ENCODE measurements at regions of chr2 and their contacts with region 1.

Region 1: DNA sequence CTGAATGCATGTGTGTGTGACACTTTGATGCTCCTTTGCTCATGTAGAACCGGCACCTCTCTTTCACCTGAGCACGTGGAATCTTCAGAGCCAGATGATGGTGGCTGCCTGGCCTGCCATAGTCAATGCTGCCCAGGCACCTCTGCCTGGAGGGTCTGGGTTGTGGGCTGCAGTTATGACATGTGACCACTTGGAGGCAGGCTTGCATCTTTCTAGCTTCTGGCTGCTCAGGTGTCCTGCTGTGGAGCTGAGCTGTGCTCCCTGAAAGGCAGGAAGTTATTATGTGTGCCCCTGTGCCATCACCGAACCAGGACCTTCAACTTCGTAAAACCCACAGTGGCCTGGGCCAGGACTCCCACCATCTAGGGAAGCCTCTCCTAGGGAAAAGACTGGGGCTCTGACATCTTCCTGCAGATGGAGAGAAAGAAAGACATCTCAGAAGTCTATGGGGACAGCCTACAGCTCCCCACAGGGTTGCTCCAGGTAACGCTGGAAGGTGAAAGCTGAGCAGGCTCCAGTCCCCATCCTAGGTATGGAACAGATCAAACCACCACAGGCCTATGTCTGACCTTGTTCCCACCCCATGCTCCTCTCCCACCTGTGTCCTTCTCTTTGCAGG is 30.2 kb downstream of the PSD4 start:
- DNase-seq: peak; percentile 47 to 91
- H3K4me3 ChIP-seq: no peak overlapping the region
- H3K27ac ChIP-seq: no peak overlapping the region
- H3K4me1 ChIP-seq: no peaks in the 10 kb centered on the region; a peak in 1 of 7 replicates
- H3K27me3 ChIP-seq: no peaks in the 10 kb centered on the region
- CTCF ChIP-seq: peak; percentile 92 to 98 (median 93)
- EP300 ChIP-seq: no peak
- POLR2A ChIP-seq: no peak
- RAD21 ChIP-seq: peak; percentile 95 to 97

Region 2: DNA sequence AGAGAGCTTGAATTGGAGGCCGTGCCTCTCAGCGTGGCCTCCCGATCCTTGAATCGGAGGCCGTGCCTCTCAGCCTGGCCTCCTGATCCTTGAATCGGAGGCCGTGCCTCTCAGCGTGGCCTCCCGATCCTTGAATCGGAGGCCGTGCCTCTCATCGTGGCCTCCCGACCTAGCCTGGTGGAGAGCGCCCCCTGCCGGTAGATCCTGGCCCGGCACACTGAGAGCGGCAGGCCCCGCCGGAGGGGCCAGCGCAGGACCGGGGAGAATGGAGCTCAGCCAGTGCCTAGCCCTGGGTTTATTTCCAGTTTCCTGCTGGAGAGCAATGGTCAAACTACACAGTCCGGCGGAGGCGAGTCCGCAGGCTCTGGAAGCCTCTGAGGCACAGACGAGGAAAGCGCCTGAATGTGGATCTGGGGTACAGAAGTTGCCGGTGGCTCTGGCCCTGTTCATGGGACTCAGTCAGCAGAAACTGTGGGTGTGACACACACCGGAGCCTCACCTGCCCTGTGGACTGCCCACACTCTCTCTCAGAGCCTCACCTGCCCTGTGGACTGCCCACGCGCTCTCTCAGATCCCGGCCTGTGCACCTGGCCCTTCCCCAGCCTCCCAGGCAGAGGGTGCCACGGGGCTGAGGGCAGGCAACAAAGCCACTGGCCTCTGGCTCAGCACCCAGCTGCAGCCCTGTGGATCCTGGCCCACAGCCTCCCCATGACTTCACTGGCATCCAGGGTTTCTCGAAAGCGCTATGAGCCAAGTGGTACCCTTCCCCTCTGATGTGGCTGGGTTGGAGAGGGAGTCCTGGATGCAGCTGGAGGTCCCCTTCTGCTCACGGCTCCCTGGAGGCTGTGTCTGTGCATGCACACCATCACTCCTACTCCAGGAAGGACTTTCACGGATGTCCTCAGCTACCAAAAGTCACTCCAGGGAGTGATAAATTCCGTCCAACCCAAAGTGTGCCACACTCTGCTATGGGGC is 152.8 kb before region 1 on chr2:
- CTCF ChIA-PET with region 1: no interaction called
- POLR2A ChIA-PET with region 1: no interaction called
- DNase-seq: no peak
- H3K4me3 ChIP-seq: no peak overlapping the region
- H3K27ac ChIP-seq: no peak overlapping the region
- H3K4me1 ChIP-seq: no peaks in the 10 kb centered on the region
- H3K27me3 ChIP-seq: no peaks in the 10 kb centered on the region
- CTCF ChIP-seq: no peak
- EP300 ChIP-seq: no peak
- POLR2A ChIP-seq: no peak
- RAD21 ChIP-seq: no peak

Region 3: GRCh38 chr2:113138428-113139322 is 65.3 kb before region 1 on chr2:
- CTCF ChIA-PET with region 1: interaction called, 253 read pairs
- POLR2A ChIA-PET with region 1: interaction called, 3 read pairs
- DNase-seq: peak in 1 of 2 experiments; percentile 48
- H3K4me3 ChIP-seq: no peak overlapping the region
- H3K27ac ChIP-seq: no peak overlapping the region
- H3K4me1 ChIP-seq: no peaks in the 10 kb centered on the region
- H3K27me3 ChIP-seq: no peaks in the 10 kb centered on the region
- CTCF ChIP-seq: peak in 2 of 3 experiments; percentile 62 to 73; a peak in 3 of 4 replicates
- EP300 ChIP-seq: no peak
- POLR2A ChIP-seq: no peak
- RAD21 ChIP-seq: peak; percentile 49 to 64

Region 4: DNA sequence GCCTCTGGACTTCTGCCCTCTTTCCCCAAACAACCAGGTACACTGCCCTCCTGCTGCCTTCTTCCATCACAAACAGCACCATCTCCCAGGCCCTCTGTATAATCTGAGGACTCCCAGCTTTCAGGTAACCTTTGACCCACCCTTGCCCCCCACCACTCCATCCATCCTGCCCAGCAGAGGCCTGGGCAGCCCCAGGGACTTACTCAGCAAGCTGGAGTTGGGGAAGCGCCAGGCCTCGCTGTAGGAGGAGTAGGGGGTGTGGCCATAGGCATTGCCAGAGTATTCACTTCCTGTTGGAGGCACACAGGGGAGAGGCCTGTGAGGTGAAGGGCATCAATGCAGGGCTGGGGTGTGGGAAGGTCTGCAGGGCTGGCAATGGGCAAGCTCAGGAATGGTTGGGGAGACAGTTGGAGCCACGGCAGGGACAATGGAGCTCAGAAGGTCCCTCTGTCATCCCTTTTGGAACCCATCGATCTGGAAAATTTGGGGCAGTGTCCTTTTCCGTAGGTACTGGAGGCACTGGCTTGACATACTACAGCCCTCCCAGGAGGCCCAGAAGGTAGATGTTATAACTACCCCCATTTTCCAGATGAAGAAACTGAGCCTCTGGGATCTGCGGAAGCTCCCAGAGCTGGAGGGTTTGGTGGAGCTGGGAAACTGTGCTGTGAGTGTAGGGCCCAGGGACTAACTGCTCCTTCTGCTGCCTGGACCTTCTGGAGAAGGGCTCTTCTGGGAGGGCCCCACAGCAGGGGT is 16.1 kb after region 1 on chr2:
- CTCF ChIA-PET with region 1: interaction called, 24 read pairs
- POLR2A ChIA-PET with region 1: no interaction called
- DNase-seq: no peak
- H3K4me3 ChIP-seq: no peak overlapping the region
- H3K27ac ChIP-seq: no peak overlapping the region
- H3K4me1 ChIP-seq: peaks cover 0 to 5% (median 4%) of the 10 kb centered on the region in 4 experiments; a peak in 4 of 7 replicates
- H3K27me3 ChIP-seq: no peaks in the 10 kb centered on the region
- CTCF ChIP-seq: no peak
- EP300 ChIP-seq: no peak
- POLR2A ChIP-seq: no peak
- RAD21 ChIP-seq: no peak

Region 5: DNA sequence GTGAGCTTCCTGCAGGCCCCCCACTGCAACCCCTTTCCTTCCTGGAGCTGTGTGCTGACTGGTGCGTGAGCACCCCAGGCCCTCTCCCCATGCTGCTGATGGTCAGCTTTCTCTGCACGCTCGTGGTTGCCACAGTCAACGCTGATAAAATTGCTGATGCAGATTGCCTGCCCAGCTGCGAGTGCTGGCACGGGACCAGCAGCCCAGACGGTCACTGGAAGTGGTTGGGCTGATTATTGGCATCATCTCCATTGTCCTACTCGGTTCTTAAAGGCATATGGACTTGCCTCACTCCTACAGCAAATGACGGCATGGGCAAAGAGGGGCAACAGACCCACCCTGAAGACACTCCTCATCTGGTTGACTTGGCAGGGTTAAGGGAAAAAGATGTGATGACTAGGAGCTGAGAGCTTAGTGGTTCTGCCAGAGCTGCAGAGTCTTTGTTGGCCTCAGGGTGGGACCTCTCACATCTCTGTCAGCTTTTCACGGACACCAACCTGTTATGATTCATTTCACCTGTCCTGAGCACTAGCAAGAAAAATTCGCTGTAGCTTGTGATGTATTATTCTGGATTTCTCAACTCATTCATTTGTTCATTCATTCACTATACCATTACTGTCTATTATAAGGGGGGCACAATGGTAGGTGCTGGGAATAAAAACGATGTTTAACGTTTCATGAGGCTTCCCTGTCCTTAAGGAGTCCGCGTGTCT is 36.3 kb after region 1 on chr2:
- CTCF ChIA-PET with region 1: interaction called, 145 read pairs
- POLR2A ChIA-PET with region 1: interaction called, 4 read pairs
- DNase-seq: no peak
- H3K4me3 ChIP-seq: no peak overlapping the region
- H3K27ac ChIP-seq: no peak overlapping the region
- H3K4me1 ChIP-seq: no peaks in the 10 kb centered on the region
- H3K27me3 ChIP-seq: no peaks in the 10 kb centered on the region
- CTCF ChIP-seq: no peak
- EP300 ChIP-seq: no peak
- POLR2A ChIP-seq: no peak
- RAD21 ChIP-seq: no peak

Region 6: GRCh38 chr2:113273027-113273551 is 69.1 kb after region 1 on chr2:
- CTCF ChIA-PET with region 1: interaction called, 11 read pairs
- POLR2A ChIA-PET with region 1: no interaction called
- DNase-seq: peak in 1 of 2 experiments; percentile 59
- H3K4me3 ChIP-seq: peak overlapping the region in 1 of 4 experiments; percentile 47; a peak in 2 of 8 replicates
- H3K27ac ChIP-seq: no peak overlapping the region
- H3K4me1 ChIP-seq: peaks cover 4 to 8% (median 7%) of the 10 kb centered on the region in 4 experiments
- H3K27me3 ChIP-seq: peaks cover 55 to 83% (median 74%) of the 10 kb centered on the region in 4 experiments
- CTCF ChIP-seq: peak; percentile 45 to 53 (median 45)
- EP300 ChIP-seq: no peak
- POLR2A ChIP-seq: no peak
- RAD21 ChIP-seq: peak; percentile 25 to 41; a peak in 3 of 4 replicates

Region 7: DNA sequence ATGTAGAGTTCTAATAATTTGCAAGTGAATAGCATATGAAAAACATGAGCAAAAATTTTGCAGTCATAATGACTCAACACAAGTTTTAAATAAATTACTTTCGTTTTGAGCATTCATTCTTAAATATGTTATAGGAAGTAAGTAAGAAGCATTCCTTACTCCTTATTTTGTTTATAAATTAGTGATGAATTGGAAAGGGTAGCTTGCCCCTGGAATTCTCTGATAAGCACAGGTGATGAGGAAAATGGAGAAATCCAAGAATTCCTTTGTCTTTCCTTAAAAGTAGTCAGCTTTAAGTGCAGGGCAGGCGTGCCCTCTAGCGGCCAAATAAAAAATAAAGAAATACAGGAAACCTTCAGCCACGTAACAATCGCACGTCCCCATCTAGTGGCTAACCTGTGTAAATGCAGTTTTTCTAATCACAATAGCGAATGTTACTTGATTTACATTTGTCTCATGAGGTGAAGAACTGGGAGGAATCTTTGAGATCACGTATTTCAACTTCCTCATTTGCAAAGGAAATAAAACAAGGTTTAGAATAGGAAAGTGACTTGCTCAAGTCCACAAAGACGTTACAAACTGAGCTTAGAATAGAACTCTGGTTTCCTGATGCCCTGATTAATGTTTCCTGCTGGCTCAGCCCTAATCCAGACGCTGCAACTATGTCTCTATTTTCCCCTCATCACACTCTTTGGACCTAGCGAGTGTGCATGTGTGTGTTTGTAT is 186.3 kb after region 1 on chr2:
- CTCF ChIA-PET with region 1: interaction called, 44 read pairs
- POLR2A ChIA-PET with region 1: no interaction called
- DNase-seq: peak in 1 of 2 experiments; percentile 62
- H3K4me3 ChIP-seq: no peak overlapping the region
- H3K27ac ChIP-seq: no peak overlapping the region
- H3K4me1 ChIP-seq: no peaks in the 10 kb centered on the region
- H3K27me3 ChIP-seq: no peaks in the 10 kb centered on the region
- CTCF ChIP-seq: peak in 2 of 3 experiments; percentile 84 to 99; a peak in 3 of 4 replicates
- EP300 ChIP-seq: no peak
- POLR2A ChIP-seq: no peak
- RAD21 ChIP-seq: peak; percentile 84 to 85